ENCODE measurements at regions of chr6 and their contacts with region 1.

Region 1: DNA sequence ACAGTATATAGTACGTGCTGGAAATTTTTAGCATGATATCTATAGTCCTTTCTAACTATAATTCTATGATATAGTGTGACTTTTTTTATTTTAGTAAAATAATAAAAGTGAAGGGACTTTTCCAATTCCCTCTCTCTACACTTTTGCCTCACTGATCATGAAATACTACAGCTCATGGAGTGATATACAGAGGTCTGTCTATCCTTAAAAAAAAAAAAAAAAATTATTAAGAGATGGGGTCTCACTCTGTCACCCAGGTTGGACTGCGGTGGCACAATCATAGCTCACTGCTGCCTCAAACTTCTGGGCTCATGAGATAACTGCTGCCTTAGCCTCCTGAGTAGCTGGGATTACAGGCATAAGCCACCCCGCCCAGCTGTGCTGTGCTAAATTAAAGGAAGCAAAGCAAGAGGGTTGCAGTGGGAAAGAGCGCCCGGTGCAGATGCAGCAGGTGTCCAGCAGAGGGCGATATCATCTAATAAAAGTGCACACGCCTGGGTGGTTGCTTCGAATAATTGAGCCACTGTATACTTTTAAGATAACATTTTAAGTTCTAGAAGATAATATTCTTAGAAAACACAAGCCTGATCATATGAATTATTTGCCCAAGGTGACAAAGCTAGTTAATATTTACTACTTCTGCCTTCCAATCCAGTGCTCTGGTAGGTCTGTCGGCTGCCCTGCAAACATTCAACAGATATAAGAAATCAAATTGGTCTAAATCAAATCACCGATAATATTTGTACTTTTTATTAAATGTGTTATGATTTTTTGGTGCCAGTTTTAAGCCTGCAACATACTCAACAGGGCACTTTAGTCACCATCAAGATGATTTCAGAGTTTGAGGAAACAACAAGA is 94.9 kb upstream of the NT5E start:
- DNase-seq: peak; percentile 82 to 96
- H3K4me3 ChIP-seq: no peak overlapping the region
- CTCF ChIP-seq: peak in 1 of 3 donors; percentile 91
- POLR2A ChIP-seq: no peak

Region 2: GRCh38 chr6:85482905-85483700 is 128.1 kb after region 1 on chr6:
- intact Hi-C with region 1: loop called (anchors 5 kb)
- DNase-seq: peak; percentile 78 to 97
- H3K4me3 ChIP-seq: no peak overlapping the region
- CTCF ChIP-seq: peak in 1 of 3 donors; percentile 96
- POLR2A ChIP-seq: no peak

Region 3: DNA sequence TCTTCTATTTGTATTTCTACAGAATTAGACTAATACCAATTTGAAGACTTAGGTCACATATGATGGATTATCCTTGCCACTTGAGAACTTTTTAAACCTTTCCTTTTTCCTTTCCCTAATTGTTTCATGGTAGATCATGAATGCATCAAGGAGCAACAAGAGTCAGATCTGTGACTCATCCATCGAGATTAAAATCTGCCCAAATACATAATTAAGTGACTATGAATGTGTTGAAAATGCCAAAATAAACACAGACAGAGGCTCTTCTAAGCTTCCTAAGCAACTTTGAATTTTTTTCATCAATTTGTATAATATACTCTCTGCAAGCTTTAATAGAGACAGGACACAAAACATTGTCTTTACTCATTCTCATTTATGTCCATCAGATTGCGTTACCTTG is 1558.8 kb after region 1 on chr6:
- intact Hi-C with region 1: no loop called
- DNase-seq: no peak
- H3K4me3 ChIP-seq: no peak overlapping the region
- CTCF ChIP-seq: no peak
- POLR2A ChIP-seq: no peak

Measured in lower leg skin (tissue), 4 donors.